Left ventricle myocardium superior (tissue), 1 donor: ENCODE measurements at regions of chr9 and their contacts with region 1.

Region 1: GRCh38 chr9:136122425-136123383 is 4.0 kb upstream of the TMEM250 start:
- DNase-seq: peak; percentile 89
- ATAC-seq: peak; percentile 26

Region 2: GRCh38 chr9:135864447-135865049 is 258.2 kb before region 1 on chr9:
- intact Hi-C with region 1: loop called (anchors 10 kb)
- DNase-seq: peak; percentile 81
- ATAC-seq: peak; percentile 45

Region 3: DNA sequence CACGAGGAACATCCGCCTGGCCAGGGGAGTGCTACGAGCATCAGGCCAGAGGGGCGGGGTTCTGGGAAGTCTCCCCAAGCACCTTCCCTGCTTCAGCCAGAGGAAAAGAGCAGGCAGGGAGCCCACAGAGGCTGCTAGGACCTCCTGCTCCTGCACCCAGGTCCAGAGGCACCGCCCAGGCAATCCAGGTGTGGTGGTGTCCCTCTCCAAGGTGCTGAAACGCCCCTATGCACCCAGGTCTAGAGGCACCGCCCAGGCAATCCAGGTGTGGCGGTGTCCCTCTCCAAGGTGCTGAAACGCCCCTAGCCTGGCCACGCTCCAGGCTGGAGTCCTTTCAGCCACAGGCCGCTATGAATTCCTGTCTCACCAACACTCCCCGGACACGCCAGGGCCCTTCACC is 150.8 kb before region 1 on chr9:
- intact Hi-C with region 1: loop called (anchors 5 kb)
- DNase-seq: no peak
- ATAC-seq: peak; percentile 15

Region 4: GRCh38 chr9:136175616-136176197 is 53.0 kb after region 1 on chr9:
- intact Hi-C with region 1: no loop called
- DNase-seq: no peak
- ATAC-seq: no peak